ENCODE measurements at regions of chr4 and their contacts with region 1.

Region 1: GRCh38 chr4:74932816-74933561 is at the start of gene PARM1:
- DNase-seq: peak; percentile 92
- total RNA-seq, gene PARM1: 74.4 TPM

Region 2: DNA sequence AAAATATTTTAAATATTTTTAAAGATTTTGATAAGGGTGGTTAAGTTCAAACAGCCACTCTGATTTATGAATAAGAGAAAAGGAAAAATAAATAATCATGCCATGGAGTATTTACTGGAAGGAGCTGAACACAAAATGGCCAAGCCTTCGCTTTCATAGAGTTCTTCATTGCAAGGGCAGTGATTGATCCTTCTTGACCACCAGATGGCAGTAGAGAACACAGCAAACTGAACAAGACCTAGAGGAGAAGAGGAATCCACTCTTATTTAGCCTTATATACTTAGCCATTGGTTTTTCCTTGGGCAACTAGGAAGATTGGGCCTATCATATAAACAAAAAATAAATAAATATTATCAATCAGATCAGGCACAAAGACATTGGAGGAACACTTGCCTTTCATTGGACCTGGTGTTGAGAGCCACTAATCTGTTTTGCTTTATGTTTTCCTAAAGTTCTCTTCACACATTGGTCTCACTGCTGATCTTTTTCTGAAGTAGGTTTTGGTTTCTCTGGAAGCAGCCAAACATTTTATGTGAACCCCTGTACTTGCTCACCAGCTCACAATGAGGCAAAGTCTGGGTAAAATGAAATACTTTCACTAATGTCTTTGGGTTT is 58.1 kb before region 1 on chr4:
- intact Hi-C with region 1: loop called (anchors 5 kb)
- DNase-seq: no peak

Region 3: GRCh38 chr4:74969507-74970474 is 36.8 kb after region 1 on chr4:
- intact Hi-C with region 1: loop called (anchors 2 kb)
- DNase-seq: no peak

Region 4: GRCh38 chr4:75118739-75119138 is 185.8 kb after region 1 on chr4:
- intact Hi-C with region 1: loop called (anchors 2 kb)
- DNase-seq: no peak

Region 5: DNA sequence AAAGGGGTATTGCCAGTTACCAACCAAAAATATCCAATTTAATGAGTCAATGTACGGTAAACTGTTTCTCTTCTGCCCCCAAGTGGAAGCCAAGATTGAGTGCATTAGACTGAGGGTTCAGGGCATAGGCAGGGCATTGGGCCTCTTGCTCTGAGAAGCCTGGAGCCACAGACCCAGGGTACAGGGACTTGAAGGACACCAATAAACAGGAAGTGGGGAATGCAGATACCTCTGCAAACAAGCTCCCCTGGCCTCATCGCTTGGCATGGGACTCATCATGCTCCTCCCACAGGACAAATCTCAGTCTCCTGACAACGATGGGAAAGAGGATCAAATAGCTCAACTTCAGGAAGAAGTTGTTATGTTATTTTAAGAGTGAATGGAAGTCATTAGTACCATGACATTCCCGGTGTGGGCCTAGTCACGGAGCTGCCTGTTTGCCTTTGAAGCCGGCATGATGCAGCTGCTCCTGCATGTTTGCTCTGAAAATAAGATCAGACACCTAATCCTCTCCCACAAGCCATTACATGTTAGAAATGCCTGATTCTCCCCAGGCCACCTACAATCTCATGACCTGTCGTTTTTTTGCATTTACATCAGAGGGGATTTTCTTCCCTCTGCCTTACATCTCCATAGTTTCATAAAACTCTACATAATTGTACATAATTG is 357.1 kb after region 1 on chr4:
- intact Hi-C with region 1: loop called (anchors 5 kb)
- DNase-seq: no peak

Region 6: DNA sequence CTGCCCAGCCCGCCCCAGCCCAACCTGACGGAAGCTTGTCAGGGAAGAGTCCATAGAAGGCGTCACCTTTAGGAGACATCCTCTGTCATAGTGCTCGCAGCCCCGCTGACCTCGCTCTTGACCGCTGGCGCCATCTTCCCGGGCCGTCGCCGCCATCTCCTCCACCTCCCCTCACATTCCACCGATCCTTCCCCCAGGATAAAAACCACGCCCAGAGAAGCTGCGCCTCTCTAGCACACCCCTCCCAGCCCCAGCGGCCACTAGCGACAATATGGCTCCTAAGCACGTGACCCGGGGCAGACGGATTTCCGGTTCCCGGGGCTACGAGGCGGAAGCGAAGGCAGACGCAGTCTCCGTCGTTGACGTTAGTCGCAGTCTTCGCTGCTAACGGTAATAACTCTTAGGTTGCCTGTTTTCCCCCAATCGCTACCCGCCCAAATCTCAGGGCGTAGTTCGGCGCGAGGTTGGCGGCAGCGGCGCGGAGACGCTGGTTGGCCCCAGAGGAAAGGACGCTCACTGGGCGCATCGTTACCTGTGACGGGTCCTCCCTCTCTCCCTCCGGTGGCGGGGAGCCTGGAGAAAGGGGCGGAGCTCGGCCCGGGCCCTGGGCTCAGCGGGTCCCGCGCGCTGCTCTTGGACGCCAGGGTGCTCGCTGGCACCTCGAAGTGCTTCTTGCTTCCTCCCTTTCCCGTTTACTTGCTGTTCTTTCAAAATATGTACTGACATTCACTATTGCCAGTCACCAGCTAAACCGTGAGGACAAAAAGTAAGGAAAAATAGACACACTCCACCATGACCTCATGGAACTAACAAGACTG is 581.4 kb after region 1 on chr4 and contains the starts of genes RCHY1 and THAP6:
- intact Hi-C with region 1: loop called (anchors 10 kb)
- DNase-seq: peak; percentile 99
- total RNA-seq, gene RCHY1: 43.4 TPM
- total RNA-seq, gene THAP6: 22.6 TPM

Measured in cardiac septum (tissue), 1 donor.